ENCODE measurements at regions of chr2 and their contacts with region 1.

Region 1: DNA sequence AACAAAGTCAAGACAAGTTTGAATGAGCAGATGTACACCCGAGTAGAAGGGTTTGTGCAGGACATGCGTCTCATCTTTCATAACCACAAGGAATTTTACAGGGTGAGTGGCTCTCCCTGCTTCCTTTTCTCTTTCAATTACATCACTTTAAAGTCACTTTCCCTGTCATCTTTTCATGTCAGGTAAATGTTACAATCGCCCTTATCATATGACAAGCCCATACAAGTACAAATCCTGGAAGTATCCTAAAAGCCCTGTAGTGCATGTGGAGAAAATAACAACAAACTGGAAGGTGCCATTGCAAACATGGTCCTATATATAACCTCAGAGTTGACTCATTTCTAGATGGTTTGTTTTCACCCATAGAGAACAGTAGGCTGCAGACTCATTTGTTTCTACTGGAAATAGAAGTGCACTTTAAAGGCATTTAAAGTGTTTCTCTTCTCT is 126.0 kb downstream of the SP100 start:
- DNase-seq: no peak
- H3K4me3 Mint-ChIP-seq: peak overlapping the region; percentile 48
- H3K27ac Mint-ChIP-seq: peak overlapping the region; percentile 85
- H3K4me1 Mint-ChIP-seq: peaks cover 61% of the 10 kb centered on the region
- H3K27me3 Mint-ChIP-seq: no peaks in the 10 kb centered on the region

Region 2: DNA sequence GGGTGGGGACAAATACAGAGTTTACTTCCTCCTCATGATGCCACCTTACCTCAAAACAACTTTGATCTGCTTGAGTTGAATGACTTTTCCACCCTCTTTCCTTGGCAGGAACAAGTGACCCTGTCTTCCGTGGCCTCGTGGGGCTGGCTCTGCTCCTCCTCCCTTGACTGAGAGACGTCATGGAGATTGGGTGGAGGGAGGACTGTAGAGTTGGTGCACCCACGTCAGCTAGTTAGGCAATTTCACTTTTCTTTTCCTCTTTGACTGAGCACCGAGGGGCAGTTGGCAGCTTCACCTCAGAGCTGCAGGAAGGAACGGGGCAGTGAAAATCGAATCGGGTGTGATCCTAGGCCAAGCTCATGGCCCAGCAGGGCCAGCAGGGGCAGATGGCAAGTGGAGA is 316.5 kb before region 1 on chr2 and contains the start of gene SP140:
- intact Hi-C with region 1: loop called (anchors 5 kb)
- DNase-seq: peak; percentile 80
- H3K4me3 Mint-ChIP-seq: peak within 1 kb of the TSS; percentile 91
- H3K27ac Mint-ChIP-seq: peak within 1 kb of the TSS; percentile 98
- H3K4me1 Mint-ChIP-seq: peaks cover 63% of the 10 kb centered on the region
- H3K27me3 Mint-ChIP-seq: no peaks in the 10 kb centered on the region
- total RNA-seq, gene SP140: 235 and 243 TPM in 2 replicates

Region 3: DNA sequence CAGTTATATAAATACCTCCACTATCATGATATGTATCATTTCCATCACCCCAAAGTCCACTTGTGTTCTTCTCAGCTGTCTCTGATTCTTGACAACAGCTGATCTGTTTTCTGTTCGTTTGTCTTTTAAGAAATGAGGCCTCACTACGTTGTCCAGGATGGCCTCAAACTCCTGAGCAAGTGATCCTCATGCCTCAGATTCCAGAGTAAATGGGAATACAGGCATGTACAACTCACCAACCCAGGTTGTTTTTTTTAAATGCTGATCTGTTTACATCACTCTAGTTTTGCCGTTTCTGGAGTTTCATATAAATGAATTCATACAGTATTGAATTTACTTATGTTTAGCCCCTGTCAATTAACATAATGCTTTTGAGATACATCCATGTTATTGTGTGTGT is 164.9 kb before region 1 on chr2:
- intact Hi-C with region 1: no loop called
- DNase-seq: no peak
- H3K4me3 Mint-ChIP-seq: no peak overlapping the region
- H3K27ac Mint-ChIP-seq: no peak overlapping the region
- H3K4me1 Mint-ChIP-seq: peaks cover 14% of the 10 kb centered on the region
- H3K27me3 Mint-ChIP-seq: peaks cover 2% of the 10 kb centered on the region

Region 4: DNA sequence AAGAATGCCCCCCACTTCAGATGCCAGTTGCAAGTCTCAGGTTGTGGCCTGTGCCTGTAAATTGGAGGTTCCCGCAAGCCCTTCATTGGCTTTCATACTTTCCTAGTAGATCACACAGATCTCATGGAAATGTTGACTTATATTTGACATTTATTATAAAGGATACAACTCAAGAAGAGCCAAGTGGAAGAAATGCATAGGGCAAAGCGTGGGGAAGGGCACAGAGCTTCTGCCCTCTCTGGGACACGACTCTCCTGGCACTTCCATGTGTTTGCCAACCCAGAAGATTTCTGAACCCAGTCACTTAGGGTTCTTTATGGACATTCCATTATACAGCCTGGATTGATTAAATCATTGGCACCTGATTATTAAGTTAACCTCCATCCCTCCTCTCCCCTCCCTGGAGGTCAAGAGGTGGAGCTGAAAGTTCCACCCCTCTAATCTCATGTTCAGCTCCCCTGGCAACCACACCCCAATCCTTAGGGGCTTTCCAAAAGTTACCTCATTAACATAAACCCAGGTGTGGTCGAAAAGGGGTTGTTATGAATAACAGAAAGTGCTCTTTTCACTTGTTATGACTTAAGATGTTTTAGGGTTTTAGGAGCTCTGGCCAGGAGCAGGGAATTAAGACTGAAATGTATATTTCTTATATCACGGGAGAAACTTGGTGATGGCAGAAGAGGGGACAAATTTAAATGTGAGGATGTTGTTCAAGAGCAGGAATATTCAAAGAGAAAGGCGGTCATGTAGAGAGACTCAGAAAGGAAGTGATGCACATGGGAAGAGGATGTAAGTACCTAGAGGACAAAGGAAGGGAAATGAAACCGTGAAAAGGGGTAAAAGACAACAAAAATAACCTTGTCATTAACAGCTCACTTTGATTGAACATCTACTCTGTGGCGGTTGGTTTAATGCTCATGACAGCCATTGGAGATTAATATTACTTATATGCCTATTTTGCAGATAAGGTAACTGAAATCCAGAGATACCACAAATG is 94.2 kb before region 1 on chr2:
- intact Hi-C with region 1: loop called (anchors 2 kb)
- DNase-seq: peak; percentile 40
- H3K4me3 Mint-ChIP-seq: peak overlapping the region; percentile 58
- H3K27ac Mint-ChIP-seq: peak overlapping the region; percentile 96
- H3K4me1 Mint-ChIP-seq: peaks cover 71% of the 10 kb centered on the region
- H3K27me3 Mint-ChIP-seq: no peaks in the 10 kb centered on the region

Region 5: DNA sequence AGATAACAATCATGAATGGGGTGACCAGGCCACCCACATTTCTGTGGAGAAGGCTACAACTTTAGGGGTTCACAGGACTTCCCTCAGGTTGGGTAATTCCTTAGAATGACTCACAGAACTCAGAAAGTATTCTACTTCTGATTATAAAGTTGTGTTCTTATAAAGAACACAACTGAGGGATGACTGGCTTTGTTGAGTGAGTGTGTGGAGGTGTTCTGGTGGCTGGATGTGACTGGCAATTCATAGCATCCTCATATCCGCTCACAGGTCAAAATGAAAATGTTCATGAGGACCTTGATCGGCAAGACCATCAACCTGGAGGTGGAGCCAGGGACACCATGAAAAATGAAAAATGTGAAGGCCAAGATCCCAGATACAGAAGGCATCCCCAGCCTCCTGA is 27.3 kb after region 1 on chr2:
- intact Hi-C with region 1: loop called (anchors 2 kb)
- DNase-seq: no peak
- H3K4me3 Mint-ChIP-seq: no peak overlapping the region
- H3K27ac Mint-ChIP-seq: no peak overlapping the region
- H3K4me1 Mint-ChIP-seq: peaks cover 25% of the 10 kb centered on the region
- H3K27me3 Mint-ChIP-seq: no peaks in the 10 kb centered on the region

Region 6: GRCh38 chr2:230602562-230603230 is 60.7 kb after region 1 on chr2:
- intact Hi-C with region 1: loop called (anchors 1 kb)
- DNase-seq: peak; percentile 37
- H3K4me3 Mint-ChIP-seq: peak overlapping the region; percentile 34
- H3K27ac Mint-ChIP-seq: peak overlapping the region; percentile 82
- H3K4me1 Mint-ChIP-seq: peaks cover 71% of the 10 kb centered on the region
- H3K27me3 Mint-ChIP-seq: no peaks in the 10 kb centered on the region

Measured in activated T-helper 1 cell treated with anti-CD3 and anti-CD28 coated beads, Interleukin-12 subunit alpha, Interleukin-12 subunit beta, Interleukin-2, Interleukin-4 antibody, amounts not matched to agents 30 ng/mL and 10 ng/mL and 1 ng/mL, durations not matched to agents 14 hours and 24 hours and 36 hours (primary cell).